Activated CD4-positive, alpha-beta memory T cell treated with anti-CD3 and anti-CD28 coated beads for 36 hours (primary cell): ENCODE measurements at regions of chr5 and their contacts with region 1.

Region 1: GRCh38 chr5:66002415-66002814 is 76.0 kb downstream of the ERBIN start:
- DNase-seq: no peak
- H3K4me3 Mint-ChIP-seq: no peak overlapping the region
- H3K27ac Mint-ChIP-seq: no peak overlapping the region
- H3K4me1 Mint-ChIP-seq: peaks cover 38% of the 10 kb centered on the region
- H3K27me3 Mint-ChIP-seq: no peaks in the 10 kb centered on the region

Region 2: GRCh38 chr5:65721720-65722574 is 280.5 kb before region 1 on chr5 and contains the starts of genes NLN and SGTB:
- CTCF ChIA-PET with region 1: no interaction called
- POLR2A ChIA-PET with region 1: no interaction called
- intact Hi-C with region 1: loop called (anchors 5 kb)
- DNase-seq: peak; percentile 88
- H3K4me3 Mint-ChIP-seq: peak within 1 kb of the TSS; percentile 89
- H3K27ac Mint-ChIP-seq: peak within 1 kb of the TSS; percentile 91
- H3K4me1 Mint-ChIP-seq: peaks cover 25% of the 10 kb centered on the region
- H3K27me3 Mint-ChIP-seq: no peaks in the 10 kb centered on the region
- total RNA-seq, gene NLN: 22.7 to 23.7 TPM
- total RNA-seq, gene SGTB: 16.5 to 16.7 TPM

Region 3: DNA sequence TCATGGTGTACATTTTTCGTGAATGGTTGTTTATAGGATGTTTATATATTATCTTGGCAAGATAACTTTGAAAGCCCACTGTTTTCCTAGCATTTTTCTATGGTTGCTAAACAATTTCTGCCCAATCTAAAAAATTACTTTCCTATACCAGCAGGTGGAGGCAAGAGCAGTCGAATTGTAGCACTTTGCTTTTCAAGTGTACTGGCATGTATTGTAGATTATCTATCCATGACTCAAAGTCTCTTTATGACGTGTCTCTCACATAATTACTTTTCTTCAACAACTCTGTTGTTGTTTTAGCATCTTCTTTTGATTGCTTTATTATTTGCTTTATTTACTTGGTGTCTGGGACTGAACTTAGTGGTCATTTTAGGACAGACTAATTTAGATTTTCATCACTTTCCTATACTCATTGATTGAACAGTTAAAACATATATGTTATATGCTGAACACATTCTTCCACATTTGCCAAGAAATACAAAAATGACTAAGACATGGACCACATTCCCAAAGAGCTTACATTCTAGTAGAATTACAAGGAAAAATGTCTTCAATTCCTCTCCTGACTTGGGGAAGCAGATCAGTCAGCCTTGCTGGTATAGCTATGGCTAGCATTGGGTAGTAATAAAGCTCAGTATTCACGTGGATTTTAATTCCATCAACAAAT is 259.7 kb before region 1 on chr5:
- CTCF ChIA-PET with region 1: no interaction called
- POLR2A ChIA-PET with region 1: no interaction called
- intact Hi-C with region 1: loop called (anchors 5 kb)
- DNase-seq: peak; percentile 42
- H3K4me3 Mint-ChIP-seq: no peak overlapping the region
- H3K27ac Mint-ChIP-seq: no peak overlapping the region
- H3K4me1 Mint-ChIP-seq: peaks cover 12% of the 10 kb centered on the region
- H3K27me3 Mint-ChIP-seq: no peaks in the 10 kb centered on the region

Region 4: GRCh38 chr5:65961633-65962032 is 40.8 kb before region 1 on chr5:
- CTCF ChIA-PET with region 1: interaction called, 3 read pairs
- POLR2A ChIA-PET with region 1: interaction called, 3 read pairs
- intact Hi-C with region 1: loop called (anchors 5 kb)
- DNase-seq: peak; percentile 24
- H3K4me3 Mint-ChIP-seq: no peak overlapping the region
- H3K27ac Mint-ChIP-seq: peak overlapping the region; percentile 1
- H3K4me1 Mint-ChIP-seq: peaks cover 47% of the 10 kb centered on the region
- H3K27me3 Mint-ChIP-seq: no peaks in the 10 kb centered on the region